Transverse colon (tissue), 4 donors: ENCODE measurements at regions of chr6 and their contacts with region 1.

Region 1: DNA sequence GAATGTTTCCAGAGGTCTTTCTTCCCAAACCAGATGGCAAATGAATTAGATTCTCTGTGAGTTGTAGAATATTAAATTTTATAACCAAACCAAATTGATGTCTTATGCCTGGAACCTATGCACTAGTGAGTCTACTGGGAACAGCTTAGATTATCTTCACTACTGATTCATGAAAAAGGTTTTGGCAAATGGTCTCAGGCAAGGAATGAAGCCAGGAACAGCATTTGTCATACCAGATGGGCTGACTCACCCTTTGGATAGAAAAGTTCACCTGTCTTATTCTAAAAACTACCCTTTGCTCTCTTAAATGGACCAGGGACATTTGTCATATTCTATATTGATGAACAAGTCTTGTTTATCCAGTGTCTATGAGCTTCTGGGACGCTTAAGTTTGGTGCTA is 135.4 kb upstream of the ECI2 start:
- DNase-seq: no peak
- H3K4me3 ChIP-seq: no peak overlapping the region
- H3K27ac ChIP-seq: no peak overlapping the region
- H3K4me1 ChIP-seq: no peaks in the 10 kb centered on the region
- H3K27me3 ChIP-seq: no peaks in the 10 kb centered on the region
- CTCF ChIP-seq: no peak
- EP300 ChIP-seq: no peak
- POLR2A ChIP-seq: no peak

Region 2: GRCh38 chr6:4381381-4381780 is 110.6 kb after region 1 on chr6:
- in situ Hi-C with region 1: no loop called
- intact Hi-C with region 1: no loop called
- DNase-seq: no peak
- H3K4me3 ChIP-seq: no peak overlapping the region
- H3K27ac ChIP-seq: no peak overlapping the region
- H3K4me1 ChIP-seq: no peaks in the 10 kb centered on the region
- H3K27me3 ChIP-seq: no peaks in the 10 kb centered on the region
- CTCF ChIP-seq: no peak
- EP300 ChIP-seq: no peak
- POLR2A ChIP-seq: no peak

Region 3: DNA sequence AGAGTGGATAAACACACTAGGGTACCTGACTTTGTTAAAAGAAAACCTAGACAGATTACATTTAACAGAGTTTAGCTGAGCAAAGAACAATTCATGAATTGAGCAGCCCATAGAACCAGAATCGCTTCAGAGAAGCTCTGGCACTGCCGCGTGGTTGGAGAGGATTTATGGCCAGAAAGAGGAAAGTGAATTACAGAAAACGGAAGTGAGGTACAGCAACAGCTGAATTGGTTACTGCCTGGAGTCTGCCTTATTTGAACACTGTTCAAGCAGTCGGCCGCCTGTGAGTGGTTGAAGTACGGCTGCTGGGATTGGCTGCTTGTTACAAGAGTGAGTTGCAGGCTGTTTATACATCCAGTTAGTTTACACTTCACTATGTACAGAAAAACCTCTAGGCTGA is 251.7 kb after region 1 on chr6:
- in situ Hi-C with region 1: no loop called
- intact Hi-C with region 1: no loop called
- DNase-seq: no peak
- H3K4me3 ChIP-seq: no peak overlapping the region
- H3K27ac ChIP-seq: no peak overlapping the region
- H3K4me1 ChIP-seq: no peaks in the 10 kb centered on the region
- H3K27me3 ChIP-seq: no peaks in the 10 kb centered on the region
- CTCF ChIP-seq: no peak
- EP300 ChIP-seq: no peak
- POLR2A ChIP-seq: no peak

Region 4: GRCh38 chr6:5930143-5930770 is 1659.5 kb after region 1 on chr6:
- in situ Hi-C with region 1: no loop called
- intact Hi-C with region 1: loop called (anchors 5 kb)
- DNase-seq: no peak
- H3K4me3 ChIP-seq: no peak overlapping the region
- H3K27ac ChIP-seq: no peak overlapping the region
- H3K4me1 ChIP-seq: no peaks in the 10 kb centered on the region
- H3K27me3 ChIP-seq: peaks cover 13% of the 10 kb centered on the region
- CTCF ChIP-seq: no peak
- EP300 ChIP-seq: no peak
- POLR2A ChIP-seq: no peak